Natural killer cell (primary cell): ENCODE measurements at regions of chr14 and their contacts with region 1.

Region 1: GRCh38 chr14:34875031-34875922 is at the start of gene BAZ1A:
- DNase-seq: peak; percentile 41 to 74
- ATAC-seq: peak in 1 of 3 donors; percentile 7
- H3K4me3 ChIP-seq: peak within 1 kb of the TSS; percentile 93
- H3K4me3 Mint-ChIP-seq: peak within 1 kb of the TSS; percentile 99
- H3K27ac ChIP-seq: peak within 1 kb of the TSS; percentile 98
- H3K27ac Mint-ChIP-seq: peak within 1 kb of the TSS; percentile 97 to 99
- H3K4me1 ChIP-seq: peaks cover 8% of the 10 kb centered on the region
- H3K4me1 Mint-ChIP-seq: peaks cover 31 to 34% of the 10 kb centered on the region in 2 donors
- H3K27me3 ChIP-seq: no peaks in the 10 kb centered on the region
- H3K27me3 Mint-ChIP-seq: no peaks in the 10 kb centered on the region
- CTCF ChIP-seq: no peak
- total RNA-seq, gene BAZ1A: 54.6 to 89.5 (median 64.6) TPM

Region 2: GRCh38 chr14:34081576-34082136 is 793.6 kb before region 1 on chr14:
- intact Hi-C with region 1: no loop called
- DNase-seq: no peak
- ATAC-seq: peak in 1 of 3 donors; percentile 7
- H3K4me3 ChIP-seq: no peak overlapping the region
- H3K4me3 Mint-ChIP-seq: no peak overlapping the region
- H3K27ac ChIP-seq: no peak overlapping the region
- H3K27ac Mint-ChIP-seq: no peak overlapping the region
- H3K4me1 ChIP-seq: no peaks in the 10 kb centered on the region
- H3K4me1 Mint-ChIP-seq: no peaks in the 10 kb centered on the region
- H3K27me3 ChIP-seq: no peaks in the 10 kb centered on the region
- H3K27me3 Mint-ChIP-seq: peaks cover 5 to 8% of the 10 kb centered on the region in 2 donors
- CTCF ChIP-seq: no peak

Region 3: GRCh38 chr14:34629657-34630529 is 245.4 kb before region 1 on chr14 and contains the start of gene SNX6:
- intact Hi-C with region 1: loop called (anchors 5 kb)
- DNase-seq: peak; percentile 80 to 93
- ATAC-seq: peak; percentile 98 to 99 (median 99)
- H3K4me3 ChIP-seq: peak within 1 kb of the TSS; percentile 94
- H3K4me3 Mint-ChIP-seq: peak within 1 kb of the TSS; percentile 93
- H3K27ac ChIP-seq: peak within 1 kb of the TSS; percentile 95
- H3K27ac Mint-ChIP-seq: peak within 1 kb of the TSS; percentile 83 to 96
- H3K4me1 ChIP-seq: peaks cover 19% of the 10 kb centered on the region
- H3K4me1 Mint-ChIP-seq: peaks cover 17 to 22% of the 10 kb centered on the region in 2 donors
- H3K27me3 ChIP-seq: no peaks in the 10 kb centered on the region
- H3K27me3 Mint-ChIP-seq: peaks cover 0 to 9% of the 10 kb centered on the region in 2 donors
- CTCF ChIP-seq: no peak
- total RNA-seq, gene SNX6: 62.6 to 77.7 (median 67.1) TPM

Region 4: DNA sequence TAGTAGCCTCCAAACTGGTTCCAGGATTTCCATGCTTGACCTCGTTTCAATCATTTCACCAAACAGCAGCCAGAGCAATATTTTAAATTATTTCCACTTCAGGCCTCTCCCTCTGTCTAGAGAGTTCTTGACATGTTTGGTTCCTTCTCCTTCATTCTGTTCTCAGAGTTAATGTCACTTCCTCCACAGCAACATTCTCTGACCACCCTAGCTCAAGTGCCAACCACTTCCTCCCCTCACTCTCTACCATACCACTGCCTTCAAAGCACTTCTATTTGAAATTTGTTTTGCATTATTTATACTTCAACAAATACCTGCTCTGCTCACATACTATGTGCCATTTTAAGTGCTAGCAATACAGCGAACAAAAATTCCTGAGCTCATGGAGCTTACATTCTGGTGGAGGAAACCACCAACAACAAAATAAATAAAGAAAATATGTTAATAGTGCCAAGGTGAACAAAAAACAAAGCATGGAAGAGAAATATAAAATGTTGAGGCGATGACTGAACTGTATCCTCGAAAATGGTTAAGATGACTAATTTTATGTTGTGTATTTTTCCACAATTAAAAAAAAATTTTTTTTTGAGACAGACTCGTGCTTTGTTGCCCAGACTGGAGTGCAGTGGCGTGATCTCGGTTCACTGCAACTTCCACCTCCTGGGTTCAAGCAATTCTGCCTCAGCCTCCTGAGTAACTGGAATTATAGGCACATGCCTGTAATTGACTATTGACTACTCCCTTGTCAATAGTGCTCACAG is 17.4 kb before region 1 on chr14:
- intact Hi-C with region 1: loop called (anchors 1 kb)
- DNase-seq: peak; percentile 27 to 64
- ATAC-seq: peak; percentile 69 to 88 (median 78)
- H3K4me3 ChIP-seq: no peak overlapping the region
- H3K4me3 Mint-ChIP-seq: peak overlapping the region; percentile 87
- H3K27ac ChIP-seq: peak overlapping the region; percentile 80
- H3K27ac Mint-ChIP-seq: peak overlapping the region; percentile 86 to 94
- H3K4me1 ChIP-seq: peaks cover 30% of the 10 kb centered on the region
- H3K4me1 Mint-ChIP-seq: peaks cover 44 to 49% of the 10 kb centered on the region in 2 donors
- H3K27me3 ChIP-seq: no peaks in the 10 kb centered on the region
- H3K27me3 Mint-ChIP-seq: no peaks in the 10 kb centered on the region
- CTCF ChIP-seq: no peak

Region 5: GRCh38 chr14:35046048-35046741 is 170.9 kb after region 1 on chr14 and contains the start of gene FAM177A1:
- intact Hi-C with region 1: loop called (anchors 2 kb)
- DNase-seq: peak; percentile 94 to 100
- ATAC-seq: peak; percentile 86 to 96 (median 87)
- H3K4me3 ChIP-seq: peak within 1 kb of the TSS; percentile 97
- H3K4me3 Mint-ChIP-seq: peak within 1 kb of the TSS; percentile 97
- H3K27ac ChIP-seq: peak within 1 kb of the TSS; percentile 100
- H3K27ac Mint-ChIP-seq: peak within 1 kb of the TSS; percentile 91 to 93
- H3K4me1 ChIP-seq: peaks cover 11% of the 10 kb centered on the region
- H3K4me1 Mint-ChIP-seq: peaks cover 25 to 31% of the 10 kb centered on the region in 2 donors
- H3K27me3 ChIP-seq: no peaks in the 10 kb centered on the region
- H3K27me3 Mint-ChIP-seq: no peaks in the 10 kb centered on the region
- CTCF ChIP-seq: no peak
- total RNA-seq, gene FAM177A1: 73.8 to 131 (median 79.6) TPM